ENCODE measurements at regions of chr2 and their contacts with region 1.

Region 1: GRCh38 chr2:165874445-165875039 is 79.0 kb downstream of the TTC21B start:
- DNase-seq: peak; percentile 28 to 58
- ATAC-seq: peak; percentile 76 to 87; a peak in 5 of 6 replicates
- H3K4me3 ChIP-seq: no peak overlapping the region
- H3K27ac ChIP-seq: no peak overlapping the region
- H3K4me1 ChIP-seq: no peaks in the 10 kb centered on the region
- CTCF ChIP-seq: peak; percentile 62
- EP300 ChIP-seq: no peak
- POLR2A ChIP-seq: no peak
- RAD21 ChIP-seq: peak; percentile 55 to 62

Region 2: DNA sequence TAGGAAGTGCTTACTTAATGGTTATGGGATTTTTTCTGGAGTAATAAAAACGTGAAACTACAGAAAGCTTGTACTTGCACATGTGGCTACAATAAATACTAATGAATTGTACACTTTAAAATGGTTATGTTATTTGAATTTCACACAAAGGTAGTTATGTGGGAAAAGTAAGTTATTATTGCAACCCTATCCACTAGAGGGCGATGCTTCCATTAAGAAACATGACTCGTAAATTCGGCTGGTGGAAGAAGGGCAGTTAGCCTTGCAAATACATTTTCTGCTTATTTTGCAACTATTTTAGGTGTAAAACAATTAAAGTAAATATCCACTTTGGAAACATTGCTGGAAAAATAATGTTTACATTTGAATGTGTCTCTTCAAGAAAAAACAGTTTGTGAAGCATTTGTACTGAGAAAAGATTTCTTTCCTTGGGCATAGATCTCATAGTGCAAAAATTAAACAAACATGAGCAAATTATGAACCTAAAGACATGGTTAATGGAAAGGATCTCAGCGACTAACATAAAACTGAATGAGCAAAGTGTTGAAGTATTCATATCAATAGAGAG is 473.2 kb before region 1 on chr2:
- CTCF ChIA-PET with region 1: interaction called, 11 read pairs
- POLR2A ChIA-PET with region 1: no interaction called
- DNase-seq: peak in 1 of 2 experiments; percentile 78
- ATAC-seq: peak in 1 of 2 experiments; percentile 74; a peak in 4 of 6 replicates
- H3K4me3 ChIP-seq: no peak overlapping the region
- H3K27ac ChIP-seq: no peak overlapping the region
- H3K4me1 ChIP-seq: no peaks in the 10 kb centered on the region
- CTCF ChIP-seq: peak; percentile 82
- EP300 ChIP-seq: no peak
- POLR2A ChIP-seq: no peak
- RAD21 ChIP-seq: peak; percentile 74 to 79

Region 3: GRCh38 chr2:165897726-165898125 is 23.2 kb after region 1 on chr2:
- CTCF ChIA-PET with region 1: no interaction called
- POLR2A ChIA-PET with region 1: no interaction called
- DNase-seq: no peak
- ATAC-seq: no peak
- H3K4me3 ChIP-seq: no peak overlapping the region
- H3K27ac ChIP-seq: no peak overlapping the region
- H3K4me1 ChIP-seq: no peaks in the 10 kb centered on the region
- CTCF ChIP-seq: no peak
- EP300 ChIP-seq: no peak
- POLR2A ChIP-seq: no peak
- RAD21 ChIP-seq: no peak

Region 4: GRCh38 chr2:167581961-167582574 is 1707.5 kb after region 1 on chr2:
- CTCF ChIA-PET with region 1: no interaction called
- POLR2A ChIA-PET with region 1: no interaction called
- DNase-seq: no peak
- ATAC-seq: no peak
- H3K4me3 ChIP-seq: no peak overlapping the region
- H3K27ac ChIP-seq: no peak overlapping the region
- H3K4me1 ChIP-seq: no peaks in the 10 kb centered on the region
- CTCF ChIP-seq: no peak
- EP300 ChIP-seq: no peak
- POLR2A ChIP-seq: no peak
- RAD21 ChIP-seq: no peak

Measured in A549 (cell line).